ENCODE measurements at regions of chr10 and their contacts with region 1.

Region 1: GRCh38 chr10:110746254-110746826 is 102.2 kb downstream of the RBM20 start:
- DNase-seq: peak; percentile 75
- H3K4me3 ChIP-seq: no peak overlapping the region
- H3K27ac ChIP-seq: no peak overlapping the region
- H3K4me1 ChIP-seq: no peaks in the 10 kb centered on the region
- H3K27me3 ChIP-seq: no peaks in the 10 kb centered on the region
- CTCF ChIP-seq: peak; percentile 80

Region 2: GRCh38 chr10:110786172-110786571 is 39.8 kb after region 1 on chr10:
- intact Hi-C with region 1: loop called (anchors 5 kb)
- DNase-seq: no peak
- H3K4me3 ChIP-seq: no peak overlapping the region
- H3K27ac ChIP-seq: no peak overlapping the region
- H3K4me1 ChIP-seq: no peaks in the 10 kb centered on the region
- H3K27me3 ChIP-seq: no peaks in the 10 kb centered on the region
- CTCF ChIP-seq: no peak

Region 3: DNA sequence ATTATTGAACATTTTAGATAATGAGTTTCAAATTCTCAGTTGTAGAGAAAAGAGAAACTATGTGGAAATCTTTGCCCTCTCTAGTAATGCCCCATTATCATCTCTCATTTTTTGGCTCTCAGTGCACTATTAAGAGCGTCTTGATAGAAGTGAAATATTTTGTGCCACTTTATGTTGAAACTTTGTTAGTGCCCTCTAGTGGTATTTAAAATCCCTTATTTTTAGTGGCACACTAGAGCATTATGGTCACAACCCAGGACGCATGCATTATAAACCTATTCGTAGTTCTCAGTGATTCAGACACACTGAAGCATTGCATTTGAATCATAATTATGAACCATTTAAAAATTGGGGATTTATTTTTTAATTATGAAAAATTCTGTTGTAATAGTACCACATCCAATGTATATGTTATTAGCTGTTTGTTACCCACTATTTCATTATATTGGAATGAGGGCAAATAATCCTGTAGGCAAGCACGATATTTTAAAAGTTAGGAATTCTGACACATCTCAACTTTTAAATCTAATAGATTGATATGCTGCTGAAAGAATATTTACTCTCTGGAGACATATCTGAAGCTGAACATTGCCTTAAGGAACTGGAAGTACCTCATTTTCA is 147.3 kb after region 1 on chr10:
- intact Hi-C with region 1: loop called (anchors 2 kb)
- DNase-seq: no peak
- H3K4me3 ChIP-seq: no peak overlapping the region
- H3K27ac ChIP-seq: no peak overlapping the region
- H3K4me1 ChIP-seq: peaks cover 4% of the 10 kb centered on the region
- H3K27me3 ChIP-seq: no peaks in the 10 kb centered on the region
- CTCF ChIP-seq: no peak

Region 4: DNA sequence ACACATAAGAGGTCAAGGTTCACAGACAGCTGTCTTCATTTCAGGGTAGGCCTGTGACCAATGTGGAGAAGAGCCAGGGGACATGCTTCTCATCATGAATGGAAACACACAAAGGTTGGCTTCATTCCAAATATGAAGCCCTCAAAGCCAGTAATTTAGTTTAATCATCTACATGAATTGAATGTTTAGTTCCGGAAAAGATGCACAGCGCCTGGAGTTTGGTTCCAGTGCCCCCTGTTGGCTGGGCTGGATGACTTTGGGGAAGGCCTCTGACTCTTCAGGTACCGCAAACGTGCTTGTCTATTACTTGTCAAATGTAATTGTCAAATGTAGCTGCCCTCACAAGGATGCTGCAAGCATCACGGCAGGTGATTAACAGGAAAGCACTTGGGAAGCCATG is 461.2 kb after region 1 on chr10:
- intact Hi-C with region 1: loop called (anchors 10 kb)
- DNase-seq: peak; percentile 71
- H3K4me3 ChIP-seq: no peak overlapping the region
- H3K27ac ChIP-seq: no peak overlapping the region
- H3K4me1 ChIP-seq: no peaks in the 10 kb centered on the region
- H3K27me3 ChIP-seq: no peaks in the 10 kb centered on the region
- CTCF ChIP-seq: peak; percentile 40